WTC11 (cell line): ENCODE measurements at regions of chr4 and their contacts with region 1.

Region 1: DNA sequence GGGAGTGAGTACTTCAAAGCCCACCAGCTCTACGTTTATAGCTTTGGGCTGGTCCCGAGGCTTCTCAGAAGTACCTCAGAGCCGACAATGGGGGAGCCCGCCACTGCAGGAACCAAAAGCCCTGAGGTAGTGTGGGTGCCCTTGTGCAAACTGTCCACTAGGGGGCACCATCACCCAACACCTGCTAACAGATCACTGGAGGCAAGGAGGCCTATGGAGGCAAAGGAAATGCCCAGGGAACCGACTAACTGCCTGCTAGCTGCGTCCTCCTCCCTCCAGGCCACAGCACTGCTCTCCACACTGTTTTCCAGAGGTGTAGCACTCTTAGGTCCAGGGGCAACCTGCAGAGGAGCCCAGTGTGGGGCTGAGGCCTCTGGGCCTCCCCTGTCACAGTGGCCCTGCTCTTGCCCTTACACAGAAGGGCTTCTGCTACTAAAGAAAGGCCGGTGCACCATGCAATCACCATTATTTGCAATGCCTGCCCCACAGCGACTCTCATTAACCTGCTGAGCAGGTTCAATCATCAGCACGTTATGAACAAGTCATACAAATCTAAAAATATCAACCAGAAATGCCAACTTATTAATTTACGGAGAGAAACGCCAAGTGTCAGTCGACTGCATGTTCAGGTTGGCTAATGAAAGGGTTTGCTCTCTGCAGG is 159.1 kb downstream of the NSUN7 start:
- DNase-seq: peak; percentile 89
- ATAC-seq: peak; percentile 97
- H3K4me3 Mint-ChIP-seq: no peak overlapping the region
- H3K27ac Mint-ChIP-seq: peak overlapping the region; percentile 23
- H3K4me1 Mint-ChIP-seq: peaks cover 11% of the 10 kb centered on the region; the same call in 1 of the 2 replicates
- H3K27me3 Mint-ChIP-seq: no peaks in the 10 kb centered on the region
- CTCF ChIP-seq: peak; percentile 96

Region 2: DNA sequence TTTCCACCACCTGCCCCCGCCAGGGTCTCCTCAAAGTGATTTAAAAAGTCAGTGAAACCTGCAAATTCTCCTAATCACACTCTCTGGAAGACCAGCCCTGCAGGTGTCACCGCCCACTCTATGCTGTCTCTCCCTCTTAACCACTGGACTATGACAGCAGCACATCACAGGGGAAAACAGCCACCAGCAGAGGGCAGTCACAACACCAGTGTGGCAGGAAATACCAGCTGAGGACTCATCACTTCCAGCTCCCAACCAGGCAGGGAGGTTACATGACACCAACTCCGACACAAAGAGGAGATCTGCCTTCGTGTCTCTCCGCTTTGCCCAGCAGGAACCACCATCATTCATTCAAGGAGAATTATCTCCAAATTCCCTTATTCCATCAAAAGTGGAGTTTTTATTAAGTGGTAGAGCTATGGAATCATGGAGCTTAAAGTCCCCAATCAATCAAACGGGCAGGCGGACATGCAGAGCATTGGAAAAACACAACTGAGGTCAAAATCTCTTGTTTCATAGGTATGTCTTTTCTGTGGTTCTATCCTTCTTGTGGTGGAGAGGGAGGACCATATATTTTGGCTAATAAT is 67.8 kb before region 1 on chr4:
- CTCF ChIA-PET with region 1: interaction called, 15 read pairs
- POLR2A ChIA-PET with region 1: no interaction called
- DNase-seq: peak; percentile 97
- ATAC-seq: peak; percentile 94
- H3K4me3 Mint-ChIP-seq: peak overlapping the region; percentile 23; the same call in 1 of the 2 replicates
- H3K27ac Mint-ChIP-seq: peak overlapping the region; percentile 82
- H3K4me1 Mint-ChIP-seq: peaks cover 19% of the 10 kb centered on the region
- H3K27me3 Mint-ChIP-seq: no peaks in the 10 kb centered on the region
- CTCF ChIP-seq: peak; percentile 69

Region 3: DNA sequence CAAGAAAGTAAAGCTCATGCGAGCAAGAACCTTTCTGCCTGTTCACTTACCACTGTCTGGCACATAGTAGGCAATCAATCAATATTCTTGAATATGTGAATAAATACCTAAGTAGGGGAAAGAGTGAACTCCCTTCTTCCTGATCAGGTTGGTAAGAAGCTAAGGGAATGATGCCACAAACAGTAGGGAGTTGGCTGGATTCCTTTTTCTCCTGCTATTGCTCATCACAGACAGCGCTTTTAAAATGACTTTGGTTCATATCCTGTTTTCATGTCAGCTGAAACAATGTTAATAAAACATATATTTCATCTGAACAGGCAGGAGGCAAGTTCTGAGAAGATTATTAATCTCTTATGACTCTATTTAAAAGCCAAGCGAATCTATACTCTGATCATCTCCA is 59.9 kb before region 1 on chr4:
- CTCF ChIA-PET with region 1: interaction called, 15 read pairs
- POLR2A ChIA-PET with region 1: no interaction called
- DNase-seq: no peak
- ATAC-seq: no peak
- H3K4me3 Mint-ChIP-seq: no peak overlapping the region
- H3K27ac Mint-ChIP-seq: peak overlapping the region; percentile 52; the same call in 1 of the 2 replicates
- H3K4me1 Mint-ChIP-seq: peaks cover 38% of the 10 kb centered on the region
- H3K27me3 Mint-ChIP-seq: no peaks in the 10 kb centered on the region
- CTCF ChIP-seq: no peak

Region 4: DNA sequence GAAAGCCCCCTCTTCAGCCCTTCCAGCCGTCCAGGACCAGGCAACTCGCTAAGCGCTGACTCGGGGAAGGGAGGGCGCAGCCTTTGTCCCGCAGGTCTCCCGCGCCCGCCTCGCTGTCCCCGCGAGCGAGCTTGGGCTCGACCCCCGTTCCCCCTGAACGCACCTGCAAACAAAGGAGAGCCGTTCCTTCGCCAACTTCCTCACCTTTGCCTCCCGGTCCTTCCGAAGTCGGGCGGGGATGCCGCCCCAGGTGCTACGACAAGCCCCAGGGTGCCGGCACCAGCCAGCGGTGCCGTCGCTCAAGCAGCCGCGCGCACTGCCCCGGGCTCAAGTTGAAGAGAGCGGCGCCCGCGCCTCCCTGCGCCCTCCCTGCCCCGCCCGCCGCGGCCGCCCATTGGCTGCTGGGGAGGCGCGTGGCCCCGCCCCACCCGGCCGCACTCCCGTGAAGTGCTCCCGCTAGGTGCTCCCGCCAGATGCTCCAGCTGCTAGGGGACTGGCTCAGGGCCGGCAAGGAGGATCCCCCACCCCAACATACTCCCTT is 51.9 kb before region 1 on chr4:
- CTCF ChIA-PET with region 1: interaction called, 11 read pairs
- POLR2A ChIA-PET with region 1: no interaction called
- DNase-seq: peak; percentile 87
- ATAC-seq: peak; percentile 98
- H3K4me3 Mint-ChIP-seq: peak overlapping the region; percentile 85
- H3K27ac Mint-ChIP-seq: no peak overlapping the region
- H3K4me1 Mint-ChIP-seq: peaks cover 13% of the 10 kb centered on the region
- H3K27me3 Mint-ChIP-seq: no peaks in the 10 kb centered on the region
- CTCF ChIP-seq: no peak

Region 5: GRCh38 chr4:40924096-40924792 is 15.4 kb after region 1 on chr4:
- CTCF ChIA-PET with region 1: interaction called, 61 read pairs
- POLR2A ChIA-PET with region 1: interaction called, 5 read pairs
- DNase-seq: peak; percentile 81
- ATAC-seq: peak; percentile 59
- H3K4me3 Mint-ChIP-seq: no peak overlapping the region
- H3K27ac Mint-ChIP-seq: no peak overlapping the region
- H3K4me1 Mint-ChIP-seq: peaks cover 16% of the 10 kb centered on the region
- H3K27me3 Mint-ChIP-seq: no peaks in the 10 kb centered on the region
- CTCF ChIP-seq: peak; percentile 87

Region 6: GRCh38 chr4:40976343-40976742 is 67.5 kb after region 1 on chr4:
- CTCF ChIA-PET with region 1: interaction called, 13 read pairs
- POLR2A ChIA-PET with region 1: no interaction called
- DNase-seq: peak; percentile 26
- ATAC-seq: peak; percentile 55
- H3K4me3 Mint-ChIP-seq: no peak overlapping the region
- H3K27ac Mint-ChIP-seq: no peak overlapping the region
- H3K4me1 Mint-ChIP-seq: 0 out of 2 replicates have a peak, but pooled peaks cover 2% of the 10 kb centered on the region
- H3K27me3 Mint-ChIP-seq: no peaks in the 10 kb centered on the region
- CTCF ChIP-seq: peak; percentile 56; the same call in 1 of the 2 replicates

Region 7: GRCh38 chr4:41214136-41214824 is 305.4 kb after region 1 on chr4 and contains the start of gene APBB2:
- CTCF ChIA-PET with region 1: interaction called, 31 read pairs
- POLR2A ChIA-PET with region 1: interaction called, 5 read pairs
- DNase-seq: peak; percentile 96
- ATAC-seq: peak; percentile 80
- H3K4me3 Mint-ChIP-seq: peak within 1 kb of the TSS; percentile 83
- H3K27ac Mint-ChIP-seq: no peak within 1 kb of the TSS
- H3K4me1 Mint-ChIP-seq: peaks cover 46% of the 10 kb centered on the region
- H3K27me3 Mint-ChIP-seq: peaks cover 13% of the 10 kb centered on the region
- CTCF ChIP-seq: peak; percentile 80
- total RNA-seq, gene APBB2: 43.2 to 49.0 TPM (median 48.5 TPM) in 3 replicates